ENCODE measurements at regions of chr11 and their contacts with region 1.

Region 1: GRCh38 chr11:20127671-20128527 is 32.4 kb downstream of the DBX1 start:
- DNase-seq: peak; percentile 83
- ATAC-seq: peak; percentile 77
- H3K4me3 Mint-ChIP-seq: no peak overlapping the region
- H3K27ac Mint-ChIP-seq: no peak overlapping the region
- H3K4me1 Mint-ChIP-seq: peaks cover 8% of the 10 kb centered on the region
- H3K27me3 Mint-ChIP-seq: peaks cover 19% of the 10 kb centered on the region
- CTCF ChIP-seq: peak; percentile 75

Region 2: DNA sequence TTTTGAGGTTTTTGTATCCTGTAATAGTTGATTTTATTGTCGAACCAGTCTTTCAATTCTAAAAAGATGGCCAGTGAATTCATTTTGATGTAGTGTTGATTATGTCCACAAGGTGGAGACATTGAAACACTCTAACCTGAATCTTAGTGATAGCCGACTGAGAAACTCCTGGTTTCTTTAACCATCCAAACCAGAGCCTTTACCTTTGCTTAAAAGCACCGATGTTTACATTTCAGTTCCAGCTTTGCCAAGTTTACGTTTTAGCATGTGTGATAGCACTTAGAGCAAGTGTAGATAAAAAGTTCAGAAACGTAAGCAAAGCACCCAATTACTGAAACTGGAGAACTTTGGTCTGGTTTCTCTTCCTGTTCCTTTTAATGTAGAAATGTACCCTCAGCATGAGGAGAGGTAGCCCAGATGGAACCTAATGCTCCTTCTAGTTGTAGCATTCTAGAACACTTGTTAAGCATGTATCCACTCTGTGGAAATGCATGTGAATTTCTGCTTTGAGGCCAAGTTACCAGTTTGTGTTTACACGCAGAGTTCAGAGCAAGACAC is 176.3 kb before region 1 on chr11:
- CTCF ChIA-PET with region 1: interaction called, 21 read pairs
- POLR2A ChIA-PET with region 1: no interaction called
- intact Hi-C with region 1: no loop called
- DNase-seq: no peak
- ATAC-seq: peak; percentile 51
- H3K4me3 Mint-ChIP-seq: no peak overlapping the region
- H3K27ac Mint-ChIP-seq: no peak overlapping the region
- H3K4me1 Mint-ChIP-seq: peaks cover 8% of the 10 kb centered on the region
- H3K27me3 Mint-ChIP-seq: peaks cover 23% of the 10 kb centered on the region
- CTCF ChIP-seq: peak; percentile 61

Region 3: DNA sequence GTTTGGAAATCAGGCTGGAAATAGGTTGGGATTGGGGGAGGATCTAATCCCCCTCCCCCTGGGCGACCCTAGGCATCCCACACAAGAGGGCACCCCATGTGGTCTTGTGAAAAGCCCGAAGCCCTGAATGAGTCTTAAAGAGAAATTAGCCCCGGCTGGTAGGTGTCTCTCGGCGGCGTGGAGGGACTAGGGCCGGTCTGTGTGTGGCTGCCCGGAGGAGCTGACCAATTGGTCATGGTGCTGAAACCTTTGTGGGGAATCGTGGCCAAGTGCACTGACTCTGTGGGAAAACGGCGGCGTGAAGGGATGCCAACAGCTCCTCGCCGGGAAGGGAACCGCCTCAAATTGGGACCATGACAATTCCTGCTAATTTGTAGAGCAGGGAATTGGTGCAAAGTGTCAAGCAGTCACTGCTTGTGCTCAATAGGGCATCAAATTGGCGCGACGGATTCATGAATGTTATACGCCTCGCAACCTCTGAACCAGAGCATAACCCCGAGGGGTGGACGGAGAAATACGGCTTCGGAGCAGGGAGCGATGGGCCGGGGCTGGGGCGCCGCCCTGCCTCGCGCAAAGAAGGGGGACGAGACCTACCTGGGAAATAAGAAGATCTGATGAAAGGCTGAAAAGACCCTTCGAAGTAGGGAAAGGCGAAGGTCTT is 30.8 kb after region 1 on chr11:
- CTCF ChIA-PET with region 1: interaction called, 11 read pairs
- POLR2A ChIA-PET with region 1: no interaction called
- intact Hi-C with region 1: no loop called
- DNase-seq: peak; percentile 27
- ATAC-seq: no peak
- H3K4me3 Mint-ChIP-seq: no peak overlapping the region
- H3K27ac Mint-ChIP-seq: no peak overlapping the region
- H3K4me1 Mint-ChIP-seq: peaks cover 25% of the 10 kb centered on the region
- H3K27me3 Mint-ChIP-seq: peaks cover 73% of the 10 kb centered on the region
- CTCF ChIP-seq: no peak

Region 4: GRCh38 chr11:20235164-20235563 is 107.3 kb after region 1 on chr11:
- CTCF ChIA-PET with region 1: no interaction called
- POLR2A ChIA-PET with region 1: no interaction called
- intact Hi-C with region 1: no loop called
- DNase-seq: no peak
- ATAC-seq: no peak
- H3K4me3 Mint-ChIP-seq: no peak overlapping the region
- H3K27ac Mint-ChIP-seq: no peak overlapping the region
- H3K4me1 Mint-ChIP-seq: no peaks in the 10 kb centered on the region
- H3K27me3 Mint-ChIP-seq: no peaks in the 10 kb centered on the region
- CTCF ChIP-seq: no peak

Region 5: DNA sequence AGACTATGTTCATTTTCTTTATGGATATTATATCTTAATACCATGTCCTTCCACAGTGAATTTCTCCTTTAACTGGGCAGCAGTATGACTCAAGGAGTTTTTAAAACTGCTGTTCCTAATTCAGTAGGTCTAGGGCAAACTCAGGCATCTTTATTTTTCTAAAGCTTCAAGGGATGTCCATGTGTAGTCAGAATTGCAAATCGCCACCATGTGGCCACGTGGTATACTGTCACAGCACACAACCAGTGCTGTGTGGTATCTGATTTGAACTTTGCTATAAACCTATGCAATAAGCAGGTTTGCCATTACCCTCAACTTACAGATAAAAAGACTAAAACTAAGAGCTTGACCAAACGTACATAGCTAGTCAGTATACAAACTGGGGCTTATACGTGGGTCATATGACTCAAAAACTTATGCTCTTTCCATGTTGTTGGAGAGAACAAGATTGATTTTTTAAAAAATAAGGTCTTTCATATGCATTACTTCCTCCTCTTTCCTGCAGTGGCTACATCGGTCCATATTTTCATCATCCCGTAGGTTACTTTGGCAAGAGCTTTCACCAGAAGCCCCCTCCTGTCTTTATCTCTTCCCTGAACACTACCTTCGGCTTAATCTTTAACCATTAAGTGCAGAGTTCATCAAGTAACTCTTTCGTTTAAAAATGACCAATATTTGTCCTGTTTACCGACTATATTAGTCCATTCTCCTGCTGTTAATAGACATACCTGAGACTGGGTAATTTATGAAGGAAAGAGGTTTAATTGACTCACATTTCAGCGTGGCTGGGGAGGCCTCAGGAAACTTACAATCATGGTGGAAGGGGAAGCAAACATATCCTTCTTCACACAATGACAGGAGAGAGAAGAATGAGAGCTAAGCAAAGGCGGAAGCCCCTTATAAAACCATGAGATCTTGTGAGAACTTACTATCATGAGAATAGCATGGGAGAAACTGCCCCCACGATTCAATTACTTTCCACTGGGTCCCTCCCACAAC is 227.6 kb after region 1 on chr11:
- CTCF ChIA-PET with region 1: interaction called, 141 read pairs
- POLR2A ChIA-PET with region 1: no interaction called
- intact Hi-C with region 1: loop called (anchors 1 kb)
- DNase-seq: peak; percentile 62
- ATAC-seq: peak; percentile 83
- H3K4me3 Mint-ChIP-seq: no peak overlapping the region
- H3K27ac Mint-ChIP-seq: no peak overlapping the region
- H3K4me1 Mint-ChIP-seq: peaks cover 4% of the 10 kb centered on the region
- H3K27me3 Mint-ChIP-seq: no peaks in the 10 kb centered on the region
- CTCF ChIP-seq: peak; percentile 39

Region 6: DNA sequence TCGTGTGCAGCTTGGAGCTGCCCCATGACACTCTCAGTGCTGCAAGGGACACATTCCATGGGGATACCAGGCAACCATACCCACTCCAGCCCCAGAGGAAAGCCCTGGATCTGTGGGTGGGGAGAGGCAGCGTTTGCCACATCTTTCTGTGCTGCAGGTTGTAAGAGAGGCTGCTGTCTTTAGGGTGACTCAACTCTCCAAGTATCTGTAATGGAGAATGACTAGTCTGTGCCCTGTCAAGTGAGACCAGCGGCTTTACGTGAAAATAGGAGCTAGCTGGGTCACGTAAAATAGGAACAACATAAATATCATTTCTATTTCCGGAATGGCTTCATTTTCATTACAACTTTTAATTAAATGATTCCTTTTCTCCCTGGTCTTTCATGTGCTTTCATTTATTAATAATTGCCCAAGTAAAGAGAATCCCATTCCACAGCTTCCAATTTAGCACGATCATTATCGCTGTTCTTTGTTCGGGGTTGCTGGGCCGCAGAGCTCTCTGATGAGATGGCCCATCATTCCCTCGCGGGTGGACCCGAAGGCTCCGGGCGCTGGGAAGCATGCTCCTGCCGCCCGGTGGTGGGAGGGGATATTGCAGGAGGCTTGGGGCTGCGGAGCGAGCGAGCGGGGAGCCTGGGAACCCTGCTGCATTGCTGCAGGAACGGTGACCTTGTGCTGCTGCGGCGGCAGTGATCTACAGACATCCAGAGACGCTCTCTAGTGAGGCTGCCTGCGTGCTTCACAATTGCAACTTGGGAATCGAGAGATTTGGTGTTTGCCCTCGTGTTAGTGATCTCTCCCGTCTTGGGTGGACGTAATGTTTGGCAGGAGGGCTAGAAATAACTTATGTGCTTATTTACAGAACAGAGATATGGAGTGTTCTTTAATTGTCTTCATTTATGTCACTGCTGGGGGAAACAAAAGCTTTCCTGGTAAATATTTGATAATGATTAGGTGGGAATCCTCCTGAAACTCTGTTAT is 482.1 kb after region 1 on chr11:
- CTCF ChIA-PET with region 1: interaction called, 20 read pairs
- POLR2A ChIA-PET with region 1: no interaction called
- intact Hi-C with region 1: loop called (anchors 2 kb)
- DNase-seq: peak; percentile 75
- ATAC-seq: peak; percentile 97
- H3K4me3 Mint-ChIP-seq: no peak overlapping the region
- H3K27ac Mint-ChIP-seq: no peak overlapping the region
- H3K4me1 Mint-ChIP-seq: peaks cover 5% of the 10 kb centered on the region
- H3K27me3 Mint-ChIP-seq: peaks cover 73% of the 10 kb centered on the region
- CTCF ChIP-seq: peak; percentile 90

Measured in activated CD8-positive, alpha-beta T cell treated with anti-CD3 and anti-CD28 coated beads for 36 hours (primary cell).